ENCODE measurements at regions of chr3 and their contacts with region 1.

Region 1: DNA sequence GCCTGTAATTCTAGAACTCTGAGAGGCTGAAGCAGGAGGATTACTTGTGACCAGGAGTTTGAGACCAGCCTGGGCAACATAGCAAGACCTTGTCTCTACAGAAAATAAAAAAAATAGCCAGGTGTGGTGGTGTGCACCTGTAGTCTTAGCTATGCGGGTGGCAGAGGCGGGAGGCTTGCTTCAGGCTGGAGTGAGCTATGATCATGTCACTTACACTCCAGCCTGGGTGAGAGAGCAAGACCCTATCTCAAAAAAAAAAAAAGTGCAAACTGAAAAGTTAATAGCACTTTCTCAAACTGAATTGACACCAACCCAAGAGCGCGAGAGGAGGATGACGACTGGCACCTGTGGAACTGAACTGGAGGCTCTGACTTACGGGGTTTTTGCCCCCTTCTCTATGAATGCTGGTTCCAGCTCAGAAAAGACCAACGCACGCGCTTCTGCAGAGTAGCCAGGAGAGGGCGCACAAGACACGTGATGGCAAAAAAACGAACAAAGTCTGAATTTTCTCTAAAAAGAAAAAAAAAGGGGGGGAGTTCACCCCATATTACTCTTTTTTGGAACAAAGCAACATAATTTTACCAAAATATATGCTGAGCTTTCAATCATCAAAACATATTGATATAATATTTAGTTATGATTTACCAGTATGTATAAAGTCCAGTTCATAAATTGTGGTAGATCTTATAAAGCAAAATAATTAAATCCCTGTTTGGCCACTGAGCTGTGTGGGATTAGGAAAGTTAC is 23.7 kb downstream of the CFAP92 start:
- DNase-seq: peak; percentile 50
- H3K4me3 ChIP-seq: no peak overlapping the region
- H3K27ac ChIP-seq: no peak overlapping the region
- H3K4me1 ChIP-seq: peaks cover 4% of the 10 kb centered on the region
- H3K27me3 ChIP-seq: no peaks in the 10 kb centered on the region
- CTCF ChIP-seq: peak; percentile 90

Region 2: DNA sequence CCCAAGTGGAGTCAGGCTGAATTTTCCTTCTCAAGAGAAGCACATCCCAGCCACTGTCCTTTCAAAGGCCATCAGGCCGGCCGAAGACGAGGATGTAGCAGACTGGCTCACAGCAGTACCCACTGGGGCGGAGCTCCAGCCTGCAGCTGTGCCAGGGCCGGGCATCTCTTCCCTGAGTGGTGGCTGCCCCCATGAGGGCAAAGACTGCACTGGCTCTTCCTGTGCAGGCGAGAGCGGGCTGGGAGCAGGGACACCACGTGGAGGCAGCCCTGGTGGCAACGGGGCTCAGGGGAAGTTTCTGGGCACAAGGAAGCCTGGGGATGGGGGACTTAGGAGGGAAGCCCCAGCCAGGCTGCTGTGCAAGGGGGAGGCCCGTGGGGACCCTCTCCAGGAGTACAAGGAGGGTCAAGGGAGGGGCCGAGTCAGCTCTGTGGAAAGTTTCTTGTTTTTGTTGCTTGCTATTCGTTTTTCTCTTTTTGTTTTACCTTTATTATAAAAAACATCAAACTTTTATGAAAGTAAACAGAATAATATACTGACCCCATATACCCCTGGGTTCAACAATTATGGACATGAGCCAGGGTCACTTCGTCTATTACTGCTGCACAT is 385.6 kb before region 1 on chr3:
- intact Hi-C with region 1: no loop called
- DNase-seq: peak; percentile 72
- H3K4me3 ChIP-seq: no peak overlapping the region
- H3K27ac ChIP-seq: no peak overlapping the region
- H3K4me1 ChIP-seq: no peaks in the 10 kb centered on the region
- H3K27me3 ChIP-seq: no peaks in the 10 kb centered on the region
- CTCF ChIP-seq: peak; percentile 46

Region 3: DNA sequence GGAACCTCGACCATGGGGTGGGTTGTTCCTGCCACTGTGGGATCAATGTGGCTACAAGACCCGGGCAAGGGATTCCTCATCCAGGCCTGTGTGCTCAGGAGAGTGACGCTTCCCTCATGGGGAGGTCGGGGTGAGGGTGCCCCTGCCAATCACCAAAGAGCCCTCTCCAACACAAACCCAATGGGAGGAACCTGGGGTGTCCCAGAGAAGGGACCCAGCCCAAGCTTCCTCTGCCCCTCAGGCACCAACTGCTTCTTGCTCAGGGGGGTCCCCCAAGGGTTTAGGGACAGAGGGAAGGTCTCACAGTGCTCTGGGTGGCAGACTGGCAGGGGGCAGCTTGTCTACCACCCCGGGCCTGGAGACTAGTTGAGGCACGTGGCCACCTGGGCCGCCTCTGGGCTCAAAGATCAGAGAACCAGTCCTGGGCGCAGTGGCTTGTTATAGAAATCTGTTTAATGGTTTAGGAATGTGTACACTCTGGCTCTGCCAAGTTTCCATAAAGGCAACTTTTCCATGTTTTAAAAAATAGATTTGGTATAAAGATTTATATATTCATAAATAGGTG is 117.1 kb after region 1 on chr3:
- intact Hi-C with region 1: loop called (anchors 10 kb)
- DNase-seq: no peak
- H3K4me3 ChIP-seq: no peak overlapping the region
- H3K27ac ChIP-seq: no peak overlapping the region
- H3K4me1 ChIP-seq: no peaks in the 10 kb centered on the region
- H3K27me3 ChIP-seq: no peaks in the 10 kb centered on the region
- CTCF ChIP-seq: no peak

Region 4: GRCh38 chr3:129249276-129250065 is 279.3 kb after region 1 on chr3 and contains the start of gene COPG1:
- intact Hi-C with region 1: loop called (anchors 5 kb)
- DNase-seq: peak; percentile 88
- H3K4me3 ChIP-seq: peak within 1 kb of the TSS; percentile 83
- H3K27ac ChIP-seq: peak within 1 kb of the TSS; percentile 90
- H3K4me1 ChIP-seq: peaks cover 10% of the 10 kb centered on the region
- H3K27me3 ChIP-seq: no peaks in the 10 kb centered on the region
- CTCF ChIP-seq: no peak
- total RNA-seq, gene COPG1: 285 to 288 TPM